Mammary epithelial cell (primary cell): ENCODE measurements at regions of chr22 and their contacts with region 1.

Region 1: GRCh38 chr22:24525416-24526037 is 29.4 kb downstream of the GUCD1 start:
- DNase-seq: peak; percentile 44
- H3K4me3 ChIP-seq: no peak overlapping the region
- H3K27ac ChIP-seq: no peak overlapping the region
- H3K4me1 ChIP-seq: peaks cover 4% of the 10 kb centered on the region
- H3K27me3 ChIP-seq: no peaks in the 10 kb centered on the region
- CTCF ChIP-seq: peak; percentile 89

Region 2: DNA sequence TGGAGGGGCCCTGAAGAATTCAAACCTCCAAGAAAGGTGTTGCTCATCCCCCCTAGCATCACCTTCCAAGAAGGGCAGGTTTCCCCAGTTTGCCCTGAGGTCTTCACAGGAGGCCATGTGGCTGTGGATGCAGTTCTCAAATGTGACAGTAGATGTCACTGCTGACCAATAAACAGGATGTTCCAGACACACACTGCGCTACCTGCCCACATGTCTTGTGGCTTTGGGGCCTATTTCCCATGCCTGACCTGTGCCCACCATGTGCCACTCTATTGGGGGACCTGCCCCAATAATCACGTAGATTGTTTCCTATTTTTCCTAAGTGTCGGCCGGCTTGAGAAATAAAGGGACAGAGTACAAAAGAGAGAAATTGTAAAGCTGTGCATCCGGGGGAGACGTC is 541.1 kb before region 1 on chr22:
- CTCF ChIA-PET with region 1: no interaction called
- dilution Hi-C with region 1: no loop called
- in situ Hi-C with region 1: no loop called
- intact Hi-C with region 1: loop called (anchors 10 kb)
- DNase-seq: peak; percentile 36
- H3K4me3 ChIP-seq: no peak overlapping the region
- H3K27ac ChIP-seq: no peak overlapping the region
- H3K4me1 ChIP-seq: no peaks in the 10 kb centered on the region
- H3K27me3 ChIP-seq: no peaks in the 10 kb centered on the region
- CTCF ChIP-seq: no peak

Region 3: DNA sequence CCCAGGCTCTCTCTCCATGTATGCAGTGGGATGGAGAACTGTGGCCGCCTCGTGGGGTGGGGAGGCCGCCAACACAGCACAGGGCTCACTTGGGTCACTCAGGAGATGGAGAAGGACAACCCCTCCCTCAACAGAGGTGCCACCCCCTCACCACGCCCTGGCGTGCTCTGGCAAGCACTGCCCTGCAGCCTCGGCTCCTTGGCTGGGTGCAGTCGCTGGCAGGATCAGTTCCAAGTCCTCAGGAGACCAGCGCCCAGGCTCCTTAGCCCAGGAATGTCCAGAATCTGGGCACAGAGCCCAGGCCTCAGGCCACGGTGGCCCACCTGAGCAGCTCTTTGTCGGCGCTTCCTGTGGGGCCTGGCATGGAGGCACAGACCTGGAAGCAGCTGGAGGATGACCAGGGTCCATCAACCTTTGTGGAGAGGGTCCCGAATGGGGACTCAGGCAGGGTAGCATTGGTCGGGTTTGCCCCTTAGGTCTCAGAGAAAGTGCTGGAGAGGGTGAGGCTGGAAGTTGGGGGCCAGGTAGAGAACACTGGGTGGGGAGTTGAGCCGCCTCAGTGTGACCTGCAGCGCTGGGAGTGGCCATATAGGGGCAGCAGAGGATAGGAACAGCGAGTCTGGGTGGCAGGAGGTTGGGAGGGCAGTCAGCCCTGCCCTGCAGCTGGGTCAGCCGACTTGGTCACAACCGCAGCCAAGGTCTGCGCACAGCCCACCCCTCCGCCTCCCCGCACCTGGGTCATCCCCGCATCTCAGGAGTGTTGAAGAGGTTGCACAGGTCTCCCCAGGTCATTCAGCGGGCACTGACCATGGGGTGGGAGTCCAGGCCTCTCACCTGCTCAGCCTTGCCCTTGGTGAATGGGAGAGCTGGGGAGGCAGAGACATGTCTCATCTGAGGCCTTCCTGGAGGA is 336.0 kb before region 1 on chr22:
- CTCF ChIA-PET with region 1: interaction called, 5 read pairs
- dilution Hi-C with region 1: no loop called
- in situ Hi-C with region 1: no loop called
- intact Hi-C with region 1: loop called (anchors 5 kb)
- DNase-seq: peak; percentile 60
- H3K4me3 ChIP-seq: peak overlapping the region in 1 of 3 experiments; percentile 11
- H3K27ac ChIP-seq: no peak overlapping the region
- H3K4me1 ChIP-seq: peaks cover 25% of the 10 kb centered on the region
- H3K27me3 ChIP-seq: no peaks in the 10 kb centered on the region
- CTCF ChIP-seq: peak; percentile 88 to 94

Region 4: DNA sequence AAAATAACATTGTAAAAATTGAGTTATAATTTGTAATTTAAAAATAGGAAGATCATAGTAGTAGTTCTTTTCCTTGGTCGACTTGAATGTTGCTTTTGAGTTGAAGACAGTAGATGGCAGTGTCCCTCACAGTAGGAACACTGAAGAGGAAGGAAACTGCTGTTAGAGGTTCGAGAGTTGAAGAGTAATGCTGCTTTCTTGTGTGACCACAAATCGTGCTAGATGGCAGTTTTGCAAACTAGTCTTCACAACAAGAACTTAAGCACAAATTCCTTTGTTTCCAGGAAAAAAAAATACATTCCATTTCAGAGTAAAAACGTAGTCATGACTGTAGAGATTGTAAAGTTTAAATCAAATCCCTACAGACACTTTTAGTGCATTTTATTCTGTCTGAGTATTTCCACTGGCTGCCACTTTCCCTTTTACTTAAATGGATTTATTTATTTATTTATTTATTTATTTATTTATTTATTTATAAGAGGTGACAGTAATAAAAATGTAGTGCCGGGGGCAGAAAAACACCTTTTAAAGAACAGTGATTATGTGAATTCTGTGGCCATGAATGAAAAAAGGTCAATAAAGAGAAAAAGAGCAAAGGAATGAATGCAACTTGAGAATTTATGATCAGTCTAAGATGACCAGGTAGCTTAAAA is 200.3 kb before region 1 on chr22:
- CTCF ChIA-PET with region 1: no interaction called
- dilution Hi-C with region 1: no loop called
- in situ Hi-C with region 1: loop called (anchors 5 to 10 kb)
- intact Hi-C with region 1: loop called (anchors 1 kb)
- DNase-seq: peak; percentile 39
- H3K4me3 ChIP-seq: no peak overlapping the region
- H3K27ac ChIP-seq: no peak overlapping the region
- H3K4me1 ChIP-seq: peaks cover 5% of the 10 kb centered on the region
- H3K27me3 ChIP-seq: no peaks in the 10 kb centered on the region
- CTCF ChIP-seq: peak; percentile 54 to 71

Region 5: DNA sequence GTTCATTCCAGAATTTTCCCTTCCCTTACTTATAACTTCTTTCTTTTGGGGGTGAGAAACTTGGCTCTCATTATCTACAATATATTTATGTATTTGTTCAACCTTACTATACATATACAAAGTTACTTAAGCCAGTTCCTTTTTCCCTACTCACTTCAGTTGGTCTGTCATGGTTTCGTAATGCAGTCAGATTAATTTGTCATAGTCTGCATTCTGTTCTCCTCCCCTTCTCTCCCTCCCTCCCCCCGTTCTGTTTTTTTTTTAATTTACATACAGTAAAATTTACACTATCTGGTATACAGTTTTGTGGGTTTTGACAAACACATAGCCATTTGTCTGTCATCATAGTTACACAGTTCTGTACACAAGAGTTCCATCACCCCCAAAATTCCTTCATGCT is 170.0 kb before region 1 on chr22:
- CTCF ChIA-PET with region 1: no interaction called
- dilution Hi-C with region 1: no loop called
- in situ Hi-C with region 1: no loop called
- intact Hi-C with region 1: no loop called
- DNase-seq: no peak
- H3K4me3 ChIP-seq: no peak overlapping the region
- H3K27ac ChIP-seq: no peak overlapping the region
- H3K4me1 ChIP-seq: peaks cover 6% of the 10 kb centered on the region
- H3K27me3 ChIP-seq: no peaks in the 10 kb centered on the region
- CTCF ChIP-seq: no peak

Region 6: GRCh38 chr22:24423519-24424000 is 102.0 kb before region 1 on chr22:
- CTCF ChIA-PET with region 1: no interaction called
- dilution Hi-C with region 1: no loop called
- in situ Hi-C with region 1: loop called (anchors 5 to 10 kb)
- intact Hi-C with region 1: loop called (anchors 1 kb)
- DNase-seq: no peak
- H3K4me3 ChIP-seq: peak overlapping the region in 2 of 3 experiments; percentile 54
- H3K27ac ChIP-seq: no peak overlapping the region
- H3K4me1 ChIP-seq: peaks cover 28% of the 10 kb centered on the region
- H3K27me3 ChIP-seq: peaks cover 3% of the 10 kb centered on the region
- CTCF ChIP-seq: peak; percentile 42 to 62